HEK293 (cell line): ENCODE measurements at regions of chr1 and their contacts with region 1.

Region 1: GRCh38 chr1:14765773-14766172 is 167.3 kb downstream of the KAZN start:
- H3K4me3 ChIP-seq: no peak overlapping the region
- H3K27ac ChIP-seq: no peak overlapping the region
- H3K4me1 ChIP-seq: no peaks in the 10 kb centered on the region
- CTCF ChIP-seq: no peak

Region 2: GRCh38 chr1:14742181-14742980 is 23.4 kb before region 1 on chr1:
- CTCF ChIA-PET with region 1: no interaction called
- POLR2A ChIA-PET with region 1: no interaction called
- H3K4me3 ChIP-seq: no peak overlapping the region
- H3K27ac ChIP-seq: no peak overlapping the region
- H3K4me1 ChIP-seq: no peaks in the 10 kb centered on the region
- CTCF ChIP-seq: no peak

Region 3: DNA sequence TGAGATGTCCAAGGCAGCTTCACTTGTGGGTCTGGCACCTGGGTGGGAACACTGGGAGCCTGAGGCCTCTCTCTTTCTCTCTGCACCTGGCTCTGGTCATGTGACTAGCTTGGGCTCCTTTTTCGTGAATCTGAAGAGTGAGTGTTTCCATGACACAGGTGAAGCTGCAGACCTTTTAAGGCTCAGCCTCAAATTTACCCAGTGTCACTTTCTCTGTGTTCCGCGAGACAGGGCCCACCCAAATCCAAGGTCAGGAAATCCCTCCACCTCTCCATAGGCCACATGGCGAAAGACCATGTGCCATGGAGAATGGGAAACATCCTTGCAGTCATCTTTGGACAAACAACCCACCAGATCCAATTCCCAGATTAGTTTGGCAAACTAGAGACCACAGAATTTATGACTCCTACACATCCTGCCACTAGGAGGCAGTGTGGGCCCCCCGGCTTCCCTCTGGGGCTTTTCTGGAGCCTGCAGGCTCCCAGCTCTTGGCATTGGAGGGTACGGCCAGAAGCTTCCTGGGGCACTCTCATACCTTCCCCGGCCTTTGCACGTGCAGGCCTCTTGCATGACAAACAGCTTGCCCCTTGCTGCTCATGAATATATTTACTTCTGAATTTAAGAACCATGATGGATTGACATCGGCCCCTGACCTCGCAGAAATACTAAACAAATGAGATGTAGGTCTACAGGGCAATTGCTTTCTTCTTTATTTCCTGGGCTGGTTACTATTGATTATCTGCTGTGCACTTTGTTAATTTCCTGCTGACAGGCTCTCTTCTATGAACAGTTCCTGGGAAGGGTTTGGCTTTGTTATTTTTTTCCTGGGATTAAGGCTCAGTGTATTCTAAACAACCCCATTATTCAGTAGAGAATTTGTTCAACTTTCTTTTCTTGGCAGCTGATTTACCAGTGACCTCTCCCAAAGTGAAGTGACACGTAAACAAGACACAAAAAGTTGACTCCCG is 13.4 kb after region 1 on chr1:
- CTCF ChIA-PET with region 1: interaction called, 24 read pairs
- POLR2A ChIA-PET with region 1: no interaction called
- H3K4me3 ChIP-seq: no peak overlapping the region
- H3K27ac ChIP-seq: no peak overlapping the region
- H3K4me1 ChIP-seq: no peaks in the 10 kb centered on the region
- CTCF ChIP-seq: peak; percentile 44; the same call in 1 of the 2 replicates